ENCODE measurements at regions of chr12 and their contacts with region 1.

Region 1: DNA sequence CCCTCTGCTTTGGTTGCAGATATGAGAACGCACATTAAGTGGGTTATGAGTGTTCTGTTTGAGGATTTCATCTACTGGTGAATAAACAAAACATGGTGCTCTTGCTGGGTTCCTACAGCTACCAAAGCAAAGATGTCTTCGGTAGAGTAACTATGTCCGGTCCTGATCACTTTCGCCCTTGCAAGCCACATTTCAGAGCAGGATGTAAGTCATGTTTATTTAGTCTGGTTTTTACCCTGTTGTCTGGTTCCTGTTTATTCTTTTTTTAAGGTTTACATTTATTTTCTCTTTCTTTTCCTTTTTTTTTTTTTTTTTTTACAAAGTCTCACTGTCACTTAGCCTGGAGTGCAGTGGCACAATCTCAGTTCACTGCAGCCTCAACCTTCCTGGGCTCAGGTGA is 99.2 kb downstream of the VEZT start:
- DNase-seq: no peak
- H3K4me3 ChIP-seq: no peak overlapping the region
- H3K27ac ChIP-seq: no peak overlapping the region
- H3K27me3 ChIP-seq: peaks cover 0 to 3% (median 0%) of the 10 kb centered on the region in 45 donors
- CTCF ChIP-seq: no peak

Region 2: GRCh38 chr12:95326855-95327254 is 10.1 kb after region 1 on chr12:
- intact Hi-C with region 1: loop called in 1 of 2 experiments (anchors 1 kb)
- DNase-seq: no peak
- H3K4me3 ChIP-seq: no peak overlapping the region
- H3K27ac ChIP-seq: no peak overlapping the region
- H3K27me3 ChIP-seq: peaks cover 0 to 4% (median 0%) of the 10 kb centered on the region in 45 donors
- CTCF ChIP-seq: no peak

Region 3: GRCh38 chr12:95351748-95352147 is 35.0 kb after region 1 on chr12:
- intact Hi-C with region 1: no loop called
- DNase-seq: no peak
- H3K4me3 ChIP-seq: no peak overlapping the region
- H3K27ac ChIP-seq: no peak overlapping the region
- H3K27me3 ChIP-seq: no peaks in the 10 kb centered on the region
- CTCF ChIP-seq: no peak

Region 4: DNA sequence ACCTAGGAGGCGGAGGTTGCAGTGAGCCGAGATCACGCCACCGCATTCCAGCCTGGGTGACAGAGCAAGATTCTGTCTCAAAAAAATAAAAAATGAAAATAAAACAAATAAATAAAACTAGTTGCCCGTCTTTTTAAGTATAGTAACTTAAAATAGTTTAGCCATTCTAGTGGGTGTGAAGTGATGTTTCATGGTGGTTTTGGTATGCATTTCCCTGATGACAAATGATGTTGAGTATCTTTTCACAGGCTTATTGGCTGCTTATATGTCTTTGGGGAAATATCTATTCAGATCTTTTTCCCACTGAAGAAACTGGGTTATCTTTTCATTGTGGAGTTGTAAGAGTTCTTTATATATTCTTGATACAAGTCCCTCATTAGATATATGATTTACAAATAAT is 54.8 kb after region 1 on chr12:
- intact Hi-C with region 1: no loop called
- DNase-seq: no peak
- H3K4me3 ChIP-seq: no peak overlapping the region
- H3K27ac ChIP-seq: no peak overlapping the region
- H3K27me3 ChIP-seq: no peaks in the 10 kb centered on the region
- CTCF ChIP-seq: no peak